ENCODE measurements at regions of chr7 and their contacts with region 1.

Region 1: DNA sequence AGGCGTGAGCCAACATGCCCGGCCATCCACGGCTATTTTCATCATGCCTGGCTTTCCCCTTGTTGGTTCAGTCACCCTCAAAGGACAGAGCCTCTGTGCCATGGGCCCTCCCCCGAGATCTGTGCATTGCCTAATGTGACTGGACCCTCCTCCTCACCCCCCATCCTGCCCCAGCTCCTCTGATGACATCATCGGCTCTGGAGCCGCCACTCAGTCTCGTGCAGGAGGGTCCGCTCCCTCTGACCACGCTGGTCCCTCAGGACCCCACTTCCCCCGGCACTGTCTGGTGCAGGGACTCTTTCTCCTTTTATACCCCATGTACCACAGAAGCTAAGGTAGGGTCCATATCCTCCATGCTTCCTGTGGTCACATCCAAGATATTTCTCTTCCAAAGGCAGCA is 33.2 kb upstream of the BAIAP2L1 start:
- DNase-seq: no peak
- ATAC-seq: no peak
- H3K4me3 ChIP-seq: no peak overlapping the region
- H3K27ac ChIP-seq: no peak overlapping the region
- H3K4me1 ChIP-seq: no peaks in the 10 kb centered on the region
- H3K27me3 ChIP-seq: no peaks in the 10 kb centered on the region

Region 2: DNA sequence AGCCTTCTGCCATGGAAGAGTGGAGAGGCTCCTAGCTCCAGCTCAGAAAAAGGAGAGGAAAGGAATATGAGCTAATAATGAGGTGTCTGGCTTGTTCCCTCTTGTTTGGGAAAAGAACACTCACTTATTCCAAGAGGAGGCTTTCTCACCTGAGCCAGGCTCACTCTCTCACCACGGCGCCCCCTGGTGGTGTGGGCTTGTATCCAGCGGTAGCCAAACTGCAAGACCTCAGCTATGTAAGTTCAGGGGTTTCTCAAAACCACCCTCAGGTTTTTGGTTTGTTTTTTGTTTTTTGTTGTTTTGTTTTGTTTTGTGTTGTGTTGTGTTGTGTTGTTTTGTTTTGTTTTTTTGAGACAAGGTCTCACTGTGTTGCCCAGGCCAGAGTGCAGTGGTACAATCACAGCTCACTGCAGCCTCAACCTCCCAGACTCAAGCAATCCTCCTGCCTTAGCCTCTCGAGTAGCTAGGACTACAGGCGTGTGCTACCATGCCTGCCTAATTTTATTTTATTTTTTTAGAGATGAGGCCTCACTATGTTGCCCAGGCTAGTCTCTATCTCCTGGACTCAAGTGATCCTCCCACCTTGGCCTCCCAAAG is 311.7 kb after region 1 on chr7:
- intact Hi-C with region 1: loop called in 3 of 4 experiments (anchors 10 kb)
- DNase-seq: peak; percentile 42 to 82 (median 70)
- ATAC-seq: no peak
- H3K4me3 ChIP-seq: no peak overlapping the region
- H3K27ac ChIP-seq: no peak overlapping the region
- H3K4me1 ChIP-seq: no peaks in the 10 kb centered on the region
- H3K27me3 ChIP-seq: no peaks in the 10 kb centered on the region

Region 3: DNA sequence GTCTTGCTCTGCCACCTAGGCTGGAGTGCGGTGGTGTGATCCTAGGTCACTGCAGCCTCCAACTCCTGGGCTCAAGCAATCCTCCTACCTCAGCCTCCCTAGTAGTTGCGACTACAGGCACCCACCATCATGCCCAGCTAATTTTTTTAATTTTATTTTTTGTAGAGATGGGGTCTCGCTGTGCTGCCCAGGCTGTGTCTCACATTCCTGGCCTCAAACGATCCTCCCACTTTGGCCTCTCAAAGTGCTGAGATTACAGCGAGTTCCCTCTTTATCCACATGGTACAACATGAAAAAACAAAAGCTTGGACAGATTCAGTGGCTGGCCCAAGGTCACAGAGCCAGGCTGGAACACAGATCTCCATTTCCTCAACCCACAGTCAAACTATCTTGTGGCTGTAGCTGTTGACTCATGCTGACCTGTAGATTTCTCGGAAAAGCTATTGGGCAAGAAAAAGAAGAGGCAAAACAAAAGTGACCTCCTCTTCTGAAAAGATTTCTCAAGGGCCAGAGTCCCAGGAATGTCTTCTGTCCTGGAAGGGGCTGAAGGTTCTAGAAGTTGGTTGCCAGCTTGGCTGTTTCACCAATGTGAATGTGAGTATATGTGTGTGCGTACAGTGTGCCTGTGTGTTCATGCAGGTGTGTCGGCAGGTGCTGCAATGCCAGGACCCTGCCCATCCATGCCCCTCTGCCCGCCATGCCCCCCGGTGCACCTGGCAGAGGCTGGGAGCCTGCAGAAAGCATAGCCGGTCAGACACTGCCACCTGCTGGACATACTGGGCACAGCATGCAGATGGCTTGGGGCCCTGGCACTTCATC is 407.3 kb after region 1 on chr7:
- intact Hi-C with region 1: loop called (anchors 2 to 5 kb)
- DNase-seq: peak; percentile 46 to 84 (median 81)
- ATAC-seq: peak; percentile 65 to 75
- H3K4me3 ChIP-seq: no peak overlapping the region
- H3K27ac ChIP-seq: no peak overlapping the region
- H3K4me1 ChIP-seq: no peaks in the 10 kb centered on the region
- H3K27me3 ChIP-seq: no peaks in the 10 kb centered on the region